ENCODE measurements at regions of chr20 and their contacts with region 1.

Region 1: GRCh38 chr20:53750827-53751619 is 157.4 kb upstream of the ZNF217 start:
- DNase-seq: peak; percentile 78
- ATAC-seq: peak; percentile 87
- H3K4me3 ChIP-seq: peak overlapping the region in 1 of 5 experiments; percentile 18
- H3K4me3 Mint-ChIP-seq: peak overlapping the region; percentile 69
- H3K27ac ChIP-seq: peak overlapping the region; percentile 75 to 87
- H3K27ac Mint-ChIP-seq: peak overlapping the region; percentile 95
- H3K4me1 ChIP-seq: peaks cover 64 to 71% of the 10 kb centered on the region in 2 donors
- H3K4me1 Mint-ChIP-seq: peaks cover 60% of the 10 kb centered on the region
- H3K27me3 ChIP-seq: no peaks in the 10 kb centered on the region
- H3K27me3 Mint-ChIP-seq: no peaks in the 10 kb centered on the region
- CTCF ChIP-seq: no peak

Region 2: DNA sequence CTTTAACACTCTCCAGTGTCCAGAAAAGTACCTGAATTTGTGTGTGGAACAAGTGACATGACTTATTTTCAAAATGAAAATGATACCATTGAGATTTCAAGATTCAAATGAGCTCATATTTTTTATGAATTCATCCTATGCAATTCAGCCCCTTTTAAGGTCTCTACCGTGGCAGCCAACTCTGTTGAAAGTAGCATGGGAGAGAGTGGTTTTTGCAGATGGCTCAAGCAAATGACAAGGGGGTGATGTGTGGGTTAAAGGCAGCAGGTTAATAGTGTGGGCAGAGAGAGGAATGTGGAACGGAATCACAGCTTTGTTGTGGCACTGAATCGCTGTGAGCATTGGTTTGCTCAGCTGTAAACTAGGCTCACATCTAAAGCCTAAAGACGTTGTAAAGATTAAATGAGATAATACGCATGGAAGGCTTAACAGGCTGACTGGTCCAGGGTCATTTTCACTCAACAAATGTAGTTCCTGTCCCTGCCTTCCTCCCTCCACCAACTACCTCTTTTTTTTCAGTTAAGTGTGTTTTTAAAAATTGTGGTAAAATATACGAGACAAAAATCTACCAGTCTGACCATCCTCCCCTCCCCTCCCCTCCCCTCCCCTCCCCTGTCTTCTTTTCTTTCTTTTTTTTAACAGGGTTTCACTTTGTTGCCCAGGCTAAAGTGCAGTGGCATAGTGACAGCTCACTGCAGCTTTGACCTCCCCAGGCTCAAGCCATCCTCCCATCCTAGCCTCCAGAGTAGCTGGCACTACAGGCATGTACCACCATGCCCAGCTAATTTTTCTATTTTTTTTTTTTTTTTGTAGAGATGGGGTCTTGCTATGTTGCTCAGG is 42.7 kb before region 1 on chr20:
- CTCF ChIA-PET with region 1: no interaction called
- POLR2A ChIA-PET with region 1: no interaction called
- intact Hi-C with region 1: loop called (anchors 5 kb)
- DNase-seq: peak; percentile 46
- ATAC-seq: peak; percentile 35
- H3K4me3 ChIP-seq: peak overlapping the region in 2 of 5 experiments; percentile 28 to 38
- H3K4me3 Mint-ChIP-seq: peak overlapping the region; percentile 72
- H3K27ac ChIP-seq: peak overlapping the region; percentile 77 to 79
- H3K27ac Mint-ChIP-seq: peak overlapping the region; percentile 88
- H3K4me1 ChIP-seq: peaks cover 42 to 58% of the 10 kb centered on the region in 2 donors
- H3K4me1 Mint-ChIP-seq: peaks cover 43% of the 10 kb centered on the region
- H3K27me3 ChIP-seq: no peaks in the 10 kb centered on the region
- H3K27me3 Mint-ChIP-seq: no peaks in the 10 kb centered on the region
- CTCF ChIP-seq: no peak

Region 3: DNA sequence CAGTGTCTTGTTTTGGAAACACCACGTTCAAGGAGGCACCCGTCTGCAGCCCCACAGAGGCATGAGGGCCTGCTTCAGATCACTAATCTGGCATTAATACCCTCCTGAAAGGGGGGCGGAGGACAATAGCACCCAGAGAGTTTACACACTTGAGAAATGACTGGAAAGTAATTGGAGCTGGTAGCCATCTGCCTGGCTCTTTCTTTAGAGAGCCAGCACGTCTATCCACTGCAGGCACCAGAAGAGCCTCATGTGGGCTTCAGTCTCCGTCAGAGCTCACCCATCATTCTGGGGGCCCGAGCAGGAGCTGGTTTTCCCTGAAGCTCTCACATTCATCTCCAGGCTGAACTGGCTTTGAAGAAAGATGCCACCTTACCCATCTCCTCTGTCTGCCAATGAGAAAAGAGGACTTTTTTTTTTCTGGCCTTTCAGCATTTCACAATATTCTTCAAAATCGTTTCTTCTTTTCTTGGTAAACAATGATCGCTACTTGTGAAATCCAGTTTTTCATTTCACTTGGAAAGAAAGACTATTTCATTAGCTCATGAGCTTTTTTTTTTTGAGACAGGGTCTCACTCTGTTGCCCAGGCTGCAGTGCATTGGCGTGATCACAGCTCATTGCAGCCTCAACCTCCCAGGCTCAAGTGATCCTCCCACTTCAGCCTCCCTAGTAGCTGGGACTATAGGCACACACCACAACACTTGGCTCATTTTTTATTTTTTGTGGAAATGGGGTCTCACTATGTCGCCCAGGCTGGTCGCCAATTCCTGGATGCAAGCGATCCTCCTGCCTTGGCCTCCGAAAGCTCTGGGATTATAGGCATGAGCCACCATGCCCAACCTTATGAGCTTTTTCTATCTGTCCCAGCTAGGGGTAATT is 32.6 kb before region 1 on chr20:
- CTCF ChIA-PET with region 1: no interaction called
- POLR2A ChIA-PET with region 1: no interaction called
- intact Hi-C with region 1: no loop called
- DNase-seq: no peak
- ATAC-seq: no peak
- H3K4me3 ChIP-seq: no peak overlapping the region
- H3K4me3 Mint-ChIP-seq: no peak overlapping the region
- H3K27ac ChIP-seq: no peak overlapping the region
- H3K27ac Mint-ChIP-seq: no peak overlapping the region
- H3K4me1 ChIP-seq: peaks cover 22 to 38% of the 10 kb centered on the region in 2 donors
- H3K4me1 Mint-ChIP-seq: peaks cover 29% of the 10 kb centered on the region
- H3K27me3 ChIP-seq: no peaks in the 10 kb centered on the region
- H3K27me3 Mint-ChIP-seq: no peaks in the 10 kb centered on the region
- CTCF ChIP-seq: no peak

Region 4: GRCh38 chr20:53738039-53738944 is 12.7 kb before region 1 on chr20:
- CTCF ChIA-PET with region 1: interaction called, 8 read pairs
- POLR2A ChIA-PET with region 1: interaction called, 5 read pairs
- intact Hi-C with region 1: loop called (anchors 1 kb)
- DNase-seq: peak; percentile 41
- ATAC-seq: no peak
- H3K4me3 ChIP-seq: no peak overlapping the region
- H3K4me3 Mint-ChIP-seq: peak overlapping the region; percentile 10
- H3K27ac ChIP-seq: peak overlapping the region; percentile 77 to 79
- H3K27ac Mint-ChIP-seq: peak overlapping the region; percentile 83
- H3K4me1 ChIP-seq: peaks cover 64 to 65% of the 10 kb centered on the region in 2 donors
- H3K4me1 Mint-ChIP-seq: peaks cover 71% of the 10 kb centered on the region
- H3K27me3 ChIP-seq: no peaks in the 10 kb centered on the region
- H3K27me3 Mint-ChIP-seq: no peaks in the 10 kb centered on the region
- CTCF ChIP-seq: no peak

Region 5: GRCh38 chr20:53786445-53787267 is 35.6 kb after region 1 on chr20:
- CTCF ChIA-PET with region 1: no interaction called
- POLR2A ChIA-PET with region 1: no interaction called
- intact Hi-C with region 1: loop called (anchors 5 kb)
- DNase-seq: peak; percentile 58
- ATAC-seq: peak; percentile 21
- H3K4me3 ChIP-seq: peak overlapping the region in 1 of 5 experiments; percentile 7
- H3K4me3 Mint-ChIP-seq: peak overlapping the region; percentile 54
- H3K27ac ChIP-seq: peak overlapping the region; percentile 26 to 51
- H3K27ac Mint-ChIP-seq: peak overlapping the region; percentile 54
- H3K4me1 ChIP-seq: peaks cover 21 to 25% of the 10 kb centered on the region in 2 donors
- H3K4me1 Mint-ChIP-seq: peaks cover 29% of the 10 kb centered on the region
- H3K27me3 ChIP-seq: no peaks in the 10 kb centered on the region
- H3K27me3 Mint-ChIP-seq: no peaks in the 10 kb centered on the region
- CTCF ChIP-seq: no peak

Region 6: GRCh38 chr20:53828682-53829254 is 77.7 kb after region 1 on chr20:
- CTCF ChIA-PET with region 1: interaction called, 3 read pairs
- POLR2A ChIA-PET with region 1: no interaction called
- intact Hi-C with region 1: loop called (anchors 2 kb)
- DNase-seq: peak; percentile 27
- ATAC-seq: no peak
- H3K4me3 ChIP-seq: peak overlapping the region; percentile 15 to 50 (median 24)
- H3K4me3 Mint-ChIP-seq: peak overlapping the region; percentile 88
- H3K27ac ChIP-seq: peak overlapping the region; percentile 83 to 93
- H3K27ac Mint-ChIP-seq: peak overlapping the region; percentile 98
- H3K4me1 ChIP-seq: peaks cover 53 to 61% of the 10 kb centered on the region in 2 donors
- H3K4me1 Mint-ChIP-seq: peaks cover 70% of the 10 kb centered on the region
- H3K27me3 ChIP-seq: no peaks in the 10 kb centered on the region
- H3K27me3 Mint-ChIP-seq: no peaks in the 10 kb centered on the region
- CTCF ChIP-seq: no peak

Region 7: GRCh38 chr20:53934421-53935343 is 183.7 kb after region 1 on chr20:
- CTCF ChIA-PET with region 1: interaction called, 10 read pairs
- POLR2A ChIA-PET with region 1: interaction called, 12 read pairs
- intact Hi-C with region 1: no loop called
- DNase-seq: peak; percentile 45
- ATAC-seq: peak; percentile 60
- H3K4me3 ChIP-seq: peak overlapping the region in 3 of 5 experiments; percentile 1 to 11 (median 4)
- H3K4me3 Mint-ChIP-seq: peak overlapping the region; percentile 76
- H3K27ac ChIP-seq: peak overlapping the region; percentile 67 to 74
- H3K27ac Mint-ChIP-seq: peak overlapping the region; percentile 84
- H3K4me1 ChIP-seq: peaks cover 60 to 72% of the 10 kb centered on the region in 2 donors
- H3K4me1 Mint-ChIP-seq: peaks cover 84% of the 10 kb centered on the region
- H3K27me3 ChIP-seq: no peaks in the 10 kb centered on the region
- H3K27me3 Mint-ChIP-seq: no peaks in the 10 kb centered on the region
- CTCF ChIP-seq: no peak